ENCODE measurements at regions of chr6 and their contacts with region 1.

Region 1: GRCh38 chr6:26553635-26554446 is 15.7 kb downstream of the HMGN4 start:
- DNase-seq: peak; percentile 81
- ATAC-seq: peak; percentile 58
- H3K4me3 ChIP-seq: peak overlapping the region; percentile 36 to 50
- H3K27ac ChIP-seq: peak overlapping the region; percentile 53
- H3K4me1 ChIP-seq: peaks cover 14 to 45% of the 10 kb centered on the region in 2 experiments
- H3K27me3 ChIP-seq: no peaks in the 10 kb centered on the region
- CTCF ChIP-seq: no peak
- POLR2A ChIP-seq: no peak
- RAD21 ChIP-seq: peak; percentile 9; the same call in 1 of the 2 replicates

Region 2: DNA sequence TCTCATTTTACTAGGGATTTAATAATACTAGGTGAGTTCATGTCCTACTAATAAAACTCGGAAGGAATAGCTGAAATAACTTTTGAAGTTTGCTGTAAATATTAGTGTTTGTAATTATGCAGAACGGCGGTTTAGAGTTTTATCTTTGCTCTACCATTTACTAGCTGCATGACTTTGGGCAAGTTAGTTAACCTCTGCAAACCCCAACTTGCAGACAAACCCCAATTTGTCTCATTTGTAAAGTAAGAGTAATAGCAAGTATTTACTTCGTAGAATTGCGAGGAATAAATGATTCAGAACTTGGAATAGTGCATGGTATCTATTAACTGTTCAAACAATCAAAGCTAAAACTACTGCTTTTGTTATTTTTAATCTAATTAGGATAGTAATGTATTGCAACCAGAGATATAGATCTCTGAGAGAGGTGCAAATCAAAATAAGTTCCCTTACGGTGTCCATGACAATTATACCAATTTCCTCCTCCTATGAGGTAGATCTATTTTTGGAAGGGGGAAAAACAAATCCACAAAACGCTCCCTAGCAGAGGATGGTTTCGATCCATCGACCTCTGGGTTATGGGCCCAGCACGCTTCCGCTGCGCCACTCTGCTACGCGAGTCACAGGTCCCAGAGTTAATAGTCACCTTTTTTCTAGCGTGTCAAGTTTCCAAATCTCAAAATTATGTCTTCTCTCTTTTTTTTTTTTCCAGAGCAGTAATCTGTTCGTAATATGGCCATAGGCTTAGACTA is 223.9 kb before region 1 on chr6:
- CTCF ChIA-PET with region 1: no interaction called
- POLR2A ChIA-PET with region 1: interaction called, 3 read pairs
- RAD21 ChIA-PET with region 1: no interaction called
- intact Hi-C with region 1: loop called (anchors 5 kb)
- DNase-seq: no peak
- ATAC-seq: peak; percentile 28
- H3K4me3 ChIP-seq: peak overlapping the region; percentile 42 to 60
- H3K27ac ChIP-seq: no peak overlapping the region
- H3K4me1 ChIP-seq: peaks cover 21 to 59% of the 10 kb centered on the region in 2 experiments
- H3K27me3 ChIP-seq: no peaks in the 10 kb centered on the region
- CTCF ChIP-seq: no peak
- POLR2A ChIP-seq: no peak
- RAD21 ChIP-seq: no peak

Measured in HCT116 (cell line).